ENCODE measurements at regions of chr15 and their contacts with region 1.

Region 1: GRCh38 chr15:25508369-25509002 is 69.7 kb upstream of the UBE3A start:
- DNase-seq: no peak
- ATAC-seq: peak; percentile 68

Region 2: DNA sequence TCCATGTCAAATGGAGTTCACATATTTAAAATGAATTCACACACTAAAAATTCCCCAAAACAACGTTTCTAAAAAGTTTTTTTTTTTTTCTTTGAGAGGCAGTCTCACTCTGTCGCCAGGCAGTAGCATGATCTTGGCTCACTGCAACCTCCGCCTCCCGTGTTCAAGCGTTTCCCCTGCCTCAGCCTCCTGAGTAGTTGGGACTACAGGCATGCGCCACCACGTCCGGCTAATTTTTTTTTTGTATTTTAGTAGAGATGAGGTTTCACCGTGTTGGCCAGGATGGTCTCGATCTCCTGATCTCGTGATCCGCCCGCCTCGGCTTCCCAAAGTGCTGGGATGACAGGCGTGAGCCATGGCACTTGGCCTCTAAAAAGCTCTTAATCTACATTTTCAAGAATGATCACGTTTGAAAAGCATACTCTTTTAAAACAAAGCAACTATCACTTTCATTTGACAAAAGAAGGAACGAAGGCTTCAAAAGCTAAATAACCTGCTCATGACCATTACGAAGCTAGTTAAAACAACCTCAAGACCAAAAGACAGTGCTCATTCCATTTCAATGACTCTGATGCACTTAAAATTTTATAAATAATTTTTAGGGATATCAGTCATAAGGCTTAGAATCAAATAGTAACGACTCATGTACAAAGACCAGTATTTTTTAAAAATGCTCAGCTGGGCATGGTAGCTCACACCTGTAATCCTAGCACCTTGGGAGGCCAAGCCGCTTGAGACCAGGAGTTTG is 75.2 kb before region 1 on chr15:
- intact Hi-C with region 1: no loop called
- DNase-seq: no peak
- ATAC-seq: no peak

Region 3: DNA sequence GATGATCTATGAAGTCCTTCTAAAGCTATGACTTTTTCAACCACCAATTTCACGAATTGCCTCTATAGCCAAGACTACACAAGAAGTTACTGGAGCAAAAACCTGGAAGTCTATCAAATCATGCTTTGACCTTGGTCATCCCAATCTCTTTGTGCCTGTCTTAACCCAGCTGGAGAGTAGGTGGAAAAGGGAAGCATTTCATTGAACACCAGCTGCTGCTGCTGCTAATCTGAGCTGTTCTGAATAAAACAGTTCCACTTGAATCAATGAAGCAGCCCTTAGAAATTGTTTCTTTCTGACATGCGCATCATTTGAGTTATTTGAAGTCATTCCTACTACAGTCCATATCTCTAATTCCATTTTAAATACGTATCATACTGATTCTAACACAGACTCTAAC is 62.4 kb before region 1 on chr15:
- intact Hi-C with region 1: no loop called
- DNase-seq: no peak
- ATAC-seq: no peak

Region 4: DNA sequence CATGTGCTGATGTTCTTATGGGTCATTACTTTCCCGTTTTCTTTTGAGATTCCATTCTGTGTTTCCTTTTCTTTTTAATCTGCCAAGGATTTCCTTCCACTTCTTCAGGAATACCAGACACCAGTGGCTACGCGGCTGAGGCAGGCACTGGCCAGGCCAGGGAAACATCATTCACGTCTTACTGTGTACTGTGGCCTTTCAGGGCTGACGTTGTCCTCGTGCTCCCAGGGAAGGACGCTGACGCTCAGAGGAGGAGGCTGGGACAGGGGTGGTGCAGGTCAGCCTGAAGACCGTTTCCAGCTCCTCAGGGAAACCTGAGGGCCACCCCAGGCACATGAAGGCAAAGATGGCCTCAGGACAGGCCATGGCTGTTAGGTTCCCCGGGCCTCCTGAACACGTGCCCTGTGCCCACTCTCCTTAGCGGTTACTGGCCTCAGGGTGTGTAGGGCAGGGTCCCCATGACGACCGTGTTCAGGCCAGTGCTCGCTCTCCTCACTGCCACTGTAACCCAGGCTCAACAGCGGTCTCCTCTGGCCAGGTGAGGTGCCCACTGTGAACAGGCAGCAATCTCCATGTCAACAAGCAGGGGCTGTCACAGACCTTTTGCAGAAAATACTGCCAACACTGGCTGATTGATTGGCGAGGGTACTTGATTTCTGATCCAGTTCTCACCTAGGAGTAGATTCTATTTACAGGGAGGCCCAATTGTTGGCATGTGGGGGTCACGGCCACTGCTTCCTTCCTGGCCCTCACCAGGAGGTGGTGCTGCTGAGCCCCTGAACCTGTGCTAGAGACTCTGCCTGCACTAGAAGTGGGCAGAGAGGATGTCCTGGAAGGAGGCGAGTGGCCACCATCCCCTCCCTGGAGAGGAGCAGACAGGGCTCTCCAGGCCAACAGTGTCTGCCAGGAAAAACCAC is 185.1 kb after region 1 on chr15:
- intact Hi-C with region 1: loop called (anchors 5 kb)
- DNase-seq: peak; percentile 50
- ATAC-seq: peak; percentile 55

Region 5: DNA sequence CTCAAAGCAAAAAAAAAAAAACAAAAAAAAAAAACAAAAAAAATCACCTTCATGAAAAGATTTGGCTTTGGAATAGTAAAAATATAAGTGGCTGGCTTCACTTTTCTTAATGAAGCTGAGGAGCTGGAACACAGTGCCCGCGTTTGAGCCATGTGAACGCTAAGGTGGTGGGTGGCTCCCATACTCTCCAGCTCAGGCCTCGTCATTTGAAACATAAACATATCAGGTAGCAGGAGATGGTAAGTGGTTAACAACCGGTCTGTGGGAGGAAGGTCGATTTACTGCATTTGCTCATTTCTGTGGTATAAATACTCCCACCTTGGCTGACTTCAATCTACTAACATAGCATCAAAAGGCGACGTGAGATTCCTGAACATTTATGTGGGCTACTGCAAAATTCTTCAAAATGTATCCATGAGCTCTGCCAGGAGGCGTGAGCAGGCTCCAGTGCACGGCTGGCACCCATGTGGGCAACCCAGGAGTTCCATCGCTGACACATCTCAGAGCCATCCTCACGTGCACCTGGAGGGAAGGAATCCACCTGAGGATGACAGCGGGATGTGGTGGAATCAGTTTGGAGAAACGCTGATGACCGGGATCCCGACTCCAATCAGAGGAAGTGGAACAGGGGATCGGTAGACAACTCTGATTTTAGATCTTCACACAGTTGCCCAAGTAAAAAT is 197.1 kb after region 1 on chr15:
- intact Hi-C with region 1: loop called (anchors 5 kb)
- DNase-seq: no peak
- ATAC-seq: no peak

Region 6: GRCh38 chr15:26864664-26865191 is 1356.2 kb after region 1 on chr15:
- intact Hi-C with region 1: loop called (anchors 10 kb)
- DNase-seq: no peak
- ATAC-seq: peak; percentile 75

Measured in Right ventricle myocardium superior (tissue), 1 donor.